ENCODE measurements at regions of chr7 and their contacts with region 1.

Region 1: DNA sequence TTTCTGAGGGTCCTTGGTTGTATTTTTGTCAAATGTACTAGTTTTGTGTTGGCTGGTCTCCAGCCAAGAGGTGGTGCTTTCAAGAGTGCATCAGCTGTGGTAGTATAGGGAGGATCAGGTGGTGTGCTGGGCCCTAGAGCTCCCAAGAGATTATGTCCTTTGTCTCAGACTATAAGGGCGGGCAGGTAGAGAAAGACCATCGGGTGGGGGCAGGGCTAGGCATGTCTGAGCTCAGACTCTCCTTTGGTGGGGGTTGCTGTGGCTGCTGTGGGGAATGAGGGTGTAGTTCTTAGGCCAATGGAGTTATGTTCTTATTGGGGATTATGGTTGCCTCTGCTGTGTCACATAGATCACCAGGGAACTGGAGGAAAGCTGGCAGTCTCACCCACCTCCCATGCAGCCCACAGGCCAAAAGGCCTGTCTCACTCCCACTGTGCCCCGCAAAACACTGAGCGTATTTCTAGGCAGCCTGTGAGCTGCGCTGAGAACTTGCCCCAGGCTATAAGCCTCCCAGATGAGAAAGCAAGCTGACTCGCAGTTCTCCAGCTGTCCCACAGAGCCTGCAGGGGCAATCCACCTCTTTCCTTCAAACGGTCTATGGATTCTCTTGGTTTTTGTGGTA is 1066.7 kb downstream of the GRM8 start:
- DNase-seq: no peak
- ATAC-seq: no peak
- H3K4me3 ChIP-seq: no peak overlapping the region
- H3K4me3 Mint-ChIP-seq: no peak overlapping the region
- H3K27ac ChIP-seq: no peak overlapping the region
- H3K27ac Mint-ChIP-seq: no peak overlapping the region
- H3K4me1 ChIP-seq: no peaks in the 10 kb centered on the region
- H3K4me1 Mint-ChIP-seq: no peaks in the 10 kb centered on the region
- H3K27me3 ChIP-seq: no peaks in the 10 kb centered on the region
- H3K27me3 Mint-ChIP-seq: no peaks in the 10 kb centered on the region
- CTCF ChIP-seq: no peak

Region 2: DNA sequence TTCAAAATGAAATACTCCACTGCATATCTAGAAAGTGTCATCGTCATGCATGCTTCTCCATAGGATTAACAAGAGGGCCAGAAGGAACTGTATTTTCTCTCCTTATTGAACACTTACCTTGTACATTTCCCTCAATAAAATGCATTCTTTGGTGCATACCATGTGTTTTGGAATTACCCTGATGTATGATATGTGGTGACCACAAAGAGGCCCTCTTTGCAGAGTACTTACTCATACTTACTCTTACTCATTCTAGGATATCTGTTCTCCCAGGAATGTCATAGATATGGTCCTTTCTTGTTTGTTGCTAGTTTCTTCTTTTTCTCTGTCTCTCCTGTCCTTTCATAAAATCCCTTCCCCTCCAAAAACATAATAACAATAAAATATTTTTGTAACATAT is 169.3 kb before region 1 on chr7:
- intact Hi-C with region 1: no loop called
- DNase-seq: no peak
- ATAC-seq: no peak
- H3K4me3 ChIP-seq: no peak overlapping the region
- H3K4me3 Mint-ChIP-seq: no peak overlapping the region
- H3K27ac ChIP-seq: no peak overlapping the region
- H3K27ac Mint-ChIP-seq: no peak overlapping the region
- H3K4me1 ChIP-seq: no peaks in the 10 kb centered on the region
- H3K4me1 Mint-ChIP-seq: no peaks in the 10 kb centered on the region
- H3K27me3 ChIP-seq: no peaks in the 10 kb centered on the region
- H3K27me3 Mint-ChIP-seq: no peaks in the 10 kb centered on the region
- CTCF ChIP-seq: no peak

Region 3: DNA sequence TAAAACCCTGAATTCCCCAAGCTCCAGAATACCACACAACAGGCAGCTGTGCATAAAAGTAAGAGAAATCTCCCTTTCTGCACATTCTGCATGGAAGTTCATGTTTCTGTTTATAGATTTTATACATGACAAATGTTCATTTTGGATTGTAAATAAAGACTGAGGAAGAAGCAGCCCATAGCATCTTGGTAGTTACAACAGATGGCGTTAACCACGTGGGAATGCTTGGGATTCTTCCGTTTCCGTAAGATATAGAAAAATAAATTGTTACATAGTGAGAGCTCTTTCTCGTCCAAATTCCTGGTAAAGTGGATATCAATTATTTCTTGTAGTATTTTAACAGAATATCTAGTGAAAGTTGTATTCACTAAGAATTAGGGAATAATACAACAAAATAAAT is 50.2 kb after region 1 on chr7:
- intact Hi-C with region 1: loop called (anchors 10 kb)
- DNase-seq: no peak
- ATAC-seq: no peak
- H3K4me3 ChIP-seq: no peak overlapping the region
- H3K4me3 Mint-ChIP-seq: no peak overlapping the region
- H3K27ac ChIP-seq: no peak overlapping the region
- H3K27ac Mint-ChIP-seq: no peak overlapping the region
- H3K4me1 ChIP-seq: no peaks in the 10 kb centered on the region
- H3K4me1 Mint-ChIP-seq: no peaks in the 10 kb centered on the region
- H3K27me3 ChIP-seq: no peaks in the 10 kb centered on the region
- H3K27me3 Mint-ChIP-seq: no peaks in the 10 kb centered on the region
- CTCF ChIP-seq: no peak